CD14-positive monocyte (primary cell): ENCODE measurements at regions of chr10 and their contacts with region 1.

Region 1: DNA sequence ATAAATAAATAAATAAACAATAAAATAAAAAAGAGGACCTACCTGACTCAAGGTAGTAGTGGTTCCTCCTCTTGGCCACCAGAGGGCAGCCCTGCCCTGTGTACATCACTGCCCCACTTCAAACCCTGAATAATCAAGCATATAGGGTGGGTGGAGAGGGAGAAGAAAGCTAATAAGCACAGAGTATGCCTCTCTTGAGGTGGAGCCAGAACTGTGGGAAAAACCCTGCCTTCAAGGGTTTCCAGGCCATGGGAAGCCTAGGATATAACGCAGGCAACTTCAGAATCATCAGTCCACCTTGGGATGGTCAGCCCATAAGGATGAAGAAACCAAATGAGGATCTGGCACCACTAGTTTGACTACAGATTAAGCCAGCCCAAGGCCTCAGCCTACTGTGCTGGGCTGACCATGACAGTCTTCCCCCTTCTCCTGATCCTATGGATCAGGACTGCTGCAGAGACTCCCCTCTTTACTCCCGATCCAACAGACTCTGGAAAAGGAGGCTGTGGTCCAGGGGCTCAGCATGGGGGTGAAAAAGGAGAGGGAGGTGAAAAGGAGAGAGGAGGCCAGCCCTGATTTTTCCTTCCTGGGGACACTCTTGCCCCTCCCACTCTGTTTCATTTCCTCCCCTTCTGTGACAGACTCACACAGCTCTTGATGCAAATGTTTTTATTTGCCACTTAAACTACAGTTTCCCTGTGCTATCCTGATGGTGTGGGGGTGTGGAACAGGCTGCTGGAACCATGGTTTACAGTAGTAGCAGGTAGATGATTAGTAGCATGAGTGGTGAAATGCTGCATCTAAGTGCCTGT is 10.1 kb downstream of the AVPI1 start:
- DNase-seq: peak in 2 of 3 donors; percentile 54 to 68
- H3K4me3 ChIP-seq: no peak overlapping the region
- H3K4me3 Mint-ChIP-seq: no peak overlapping the region
- H3K27ac ChIP-seq: peak overlapping the region in 1 of 2 donors; percentile 22
- H3K27ac Mint-ChIP-seq: peak overlapping the region in 6 of 7 donors; percentile 20 to 61 (median 48)
- H3K4me1 ChIP-seq: peaks cover 8 to 11% of the 10 kb centered on the region in 2 donors
- H3K4me1 Mint-ChIP-seq: peaks cover 19% of the 10 kb centered on the region
- H3K27me3 ChIP-seq: no peaks in the 10 kb centered on the region
- H3K27me3 Mint-ChIP-seq: no peaks in the 10 kb centered on the region
- CTCF ChIP-seq: peak; percentile 97

Region 2: DNA sequence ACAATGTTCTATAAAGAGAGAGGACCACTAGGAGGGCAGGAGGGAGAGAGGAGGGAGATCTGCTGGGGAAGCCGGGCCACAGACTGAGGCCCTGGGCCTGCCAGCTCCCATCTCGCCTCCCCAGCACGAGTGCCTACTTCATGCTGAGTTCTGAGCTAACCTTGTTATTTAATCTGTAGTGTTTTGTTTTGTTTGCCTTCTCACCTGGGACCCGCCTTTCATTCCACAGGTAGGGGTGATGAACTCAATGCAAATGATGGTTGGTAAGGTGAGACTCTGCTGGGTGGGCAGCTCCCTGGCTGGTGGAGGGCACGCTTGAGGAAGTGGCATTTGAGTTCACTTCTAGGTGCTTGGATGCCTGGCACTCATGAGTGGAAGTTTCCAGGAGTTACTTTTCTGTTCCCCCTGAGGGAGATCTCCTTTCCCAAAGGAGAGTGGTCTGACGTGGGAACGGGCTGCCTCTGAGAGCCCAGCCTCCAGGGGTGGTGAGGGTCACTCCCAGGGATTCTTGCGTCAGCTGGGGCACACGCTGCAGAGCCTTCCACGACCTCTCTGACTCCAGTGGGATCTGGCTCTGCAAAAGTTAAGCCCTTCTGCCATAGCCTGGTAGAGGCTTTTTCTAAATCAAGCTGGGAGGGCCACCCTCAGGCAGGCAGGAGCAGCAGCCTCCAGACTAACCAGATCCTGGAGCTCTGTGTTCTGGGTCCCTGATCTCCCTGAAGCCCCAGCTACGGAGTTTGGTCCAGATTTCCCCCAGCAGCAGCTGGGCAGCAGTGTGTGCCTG is 155.8 kb before region 1 on chr10:
- intact Hi-C with region 1: no loop called
- DNase-seq: no peak
- H3K4me3 ChIP-seq: no peak overlapping the region
- H3K4me3 Mint-ChIP-seq: no peak overlapping the region
- H3K27ac ChIP-seq: no peak overlapping the region
- H3K27ac Mint-ChIP-seq: no peak overlapping the region
- H3K4me1 ChIP-seq: no peaks in the 10 kb centered on the region
- H3K4me1 Mint-ChIP-seq: peaks cover 8% of the 10 kb centered on the region
- H3K27me3 ChIP-seq: no peaks in the 10 kb centered on the region
- H3K27me3 Mint-ChIP-seq: no peaks in the 10 kb centered on the region
- CTCF ChIP-seq: no peak

Region 3: DNA sequence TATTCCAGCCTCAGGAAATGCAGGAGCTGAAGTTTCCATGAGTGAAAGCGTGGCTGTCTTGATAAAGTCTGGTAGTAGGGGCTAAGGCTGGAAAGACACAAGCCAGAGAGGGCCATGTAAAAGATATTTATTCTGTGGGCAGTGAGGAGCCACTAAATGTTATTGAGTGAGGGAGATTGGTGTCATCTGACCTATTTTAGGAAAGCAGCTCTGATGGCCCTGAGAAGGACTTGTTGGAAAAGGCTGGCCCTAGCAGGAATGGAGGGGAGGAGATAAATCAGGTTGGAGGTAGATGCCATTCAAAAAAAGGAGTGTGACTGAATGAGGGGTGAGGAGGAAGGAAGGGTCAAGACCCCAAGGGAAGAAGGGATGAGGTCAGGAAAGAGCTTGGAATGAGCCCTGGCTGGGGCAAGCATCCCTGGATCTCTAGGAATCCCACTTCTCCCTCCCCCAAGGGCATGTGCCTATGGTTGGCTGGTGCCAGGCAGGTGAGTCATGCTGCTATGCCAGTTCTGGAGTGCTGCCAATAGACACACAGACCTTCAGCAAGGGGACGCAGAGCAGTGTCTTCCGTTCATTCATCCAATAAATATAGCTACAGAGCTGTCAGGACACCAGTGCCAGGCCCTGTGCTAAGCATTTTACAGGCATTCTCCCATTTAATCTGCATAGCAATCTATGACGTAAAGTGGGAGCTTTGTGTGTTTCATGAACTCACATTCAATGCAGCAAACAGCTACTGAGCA is 102.4 kb before region 1 on chr10:
- intact Hi-C with region 1: no loop called
- DNase-seq: peak in 2 of 3 donors; percentile 12 to 18
- H3K4me3 ChIP-seq: no peak overlapping the region
- H3K4me3 Mint-ChIP-seq: no peak overlapping the region
- H3K27ac ChIP-seq: no peak overlapping the region
- H3K27ac Mint-ChIP-seq: no peak overlapping the region
- H3K4me1 ChIP-seq: no peaks in the 10 kb centered on the region
- H3K4me1 Mint-ChIP-seq: no peaks in the 10 kb centered on the region
- H3K27me3 ChIP-seq: peaks cover 0 to 6% of the 10 kb centered on the region in 2 donors
- H3K27me3 Mint-ChIP-seq: peaks cover 6 to 20% (median 15%) of the 10 kb centered on the region in 3 donors
- CTCF ChIP-seq: no peak

Region 4: DNA sequence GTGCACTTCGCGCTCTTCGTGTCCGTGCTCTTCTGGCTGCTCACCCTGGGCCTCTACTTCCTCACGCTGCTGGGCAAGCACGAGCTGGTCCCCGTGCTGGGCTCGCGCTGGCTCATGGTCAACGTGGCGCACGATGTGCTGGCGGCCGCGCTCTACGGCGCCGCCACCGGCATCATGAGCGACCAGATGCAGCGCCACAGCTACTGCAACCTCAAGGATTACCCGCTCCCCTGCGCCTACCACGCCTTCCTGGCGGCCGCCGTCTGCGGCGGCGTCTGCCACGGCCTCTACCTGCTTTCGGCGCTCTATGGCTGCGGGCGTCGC is 37.0 kb after region 1 on chr10:
- intact Hi-C with region 1: loop called in 1 of 2 experiments (anchors 5 kb)
- DNase-seq: peak; percentile 78 to 90 (median 86)
- H3K4me3 ChIP-seq: peak overlapping the region; percentile 40 to 70 (median 43)
- H3K4me3 Mint-ChIP-seq: peak overlapping the region; percentile 80 to 92
- H3K27ac ChIP-seq: peak overlapping the region; percentile 68 to 89
- H3K27ac Mint-ChIP-seq: peak overlapping the region; percentile 85 to 94 (median 92)
- H3K4me1 ChIP-seq: peaks cover 60 to 71% of the 10 kb centered on the region in 2 donors
- H3K4me1 Mint-ChIP-seq: peaks cover 62% of the 10 kb centered on the region
- H3K27me3 ChIP-seq: no peaks in the 10 kb centered on the region
- H3K27me3 Mint-ChIP-seq: peaks cover 0 to 5% (median 2%) of the 10 kb centered on the region in 3 donors
- CTCF ChIP-seq: no peak

Region 5: GRCh38 chr10:97731346-97732051 is 54.5 kb after region 1 on chr10:
- intact Hi-C with region 1: loop called in 1 of 2 experiments (anchors 5 kb)
- DNase-seq: peak; percentile 59 to 74 (median 71)
- H3K4me3 ChIP-seq: no peak overlapping the region
- H3K4me3 Mint-ChIP-seq: no peak overlapping the region
- H3K27ac ChIP-seq: no peak overlapping the region
- H3K27ac Mint-ChIP-seq: no peak overlapping the region
- H3K4me1 ChIP-seq: peaks cover 8 to 9% of the 10 kb centered on the region in 2 donors
- H3K4me1 Mint-ChIP-seq: peaks cover 13% of the 10 kb centered on the region
- H3K27me3 ChIP-seq: no peaks in the 10 kb centered on the region
- H3K27me3 Mint-ChIP-seq: peaks cover 0 to 3% (median 2%) of the 10 kb centered on the region in 3 donors
- CTCF ChIP-seq: peak; percentile 89